Adrenal gland (tissue), 19 donors: ENCODE measurements at regions of chr3 and their contacts with region 1.

Region 1: DNA sequence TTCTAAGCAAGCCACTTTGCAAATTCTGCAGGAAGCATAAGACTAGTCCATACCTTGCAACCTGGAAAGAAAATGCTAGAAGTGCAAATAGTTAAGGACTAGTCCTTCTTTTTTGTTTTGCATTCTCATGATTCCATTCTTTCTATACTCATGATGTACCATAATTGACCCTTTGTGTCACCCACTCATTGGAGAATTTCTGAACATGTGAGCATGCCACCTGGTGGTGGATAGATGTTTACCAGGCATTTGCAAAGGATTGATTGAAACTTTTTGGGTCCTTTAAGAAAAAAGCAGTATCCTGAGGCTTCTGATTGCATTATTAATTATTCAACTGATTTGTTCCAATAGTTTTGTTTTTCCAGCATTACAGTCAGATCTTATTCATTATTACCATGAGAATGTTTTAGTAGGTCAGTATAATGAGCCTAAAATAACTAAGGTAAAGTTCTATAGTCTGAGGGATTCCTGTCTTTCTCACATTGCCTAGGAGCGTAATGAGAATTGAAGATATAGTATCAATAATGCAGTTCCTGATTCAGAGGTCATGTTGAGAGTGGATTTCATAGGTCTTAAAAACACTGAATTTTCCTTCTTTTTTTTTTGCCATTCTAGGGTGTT is 20.2 kb upstream of the DIPK2A start:
- DNase-seq: peak in 4 of 7 donors; percentile 14 to 55 (median 29)
- H3K4me3 ChIP-seq: no peak overlapping the region
- H3K27ac ChIP-seq: no peak overlapping the region
- H3K4me1 ChIP-seq: no peaks in the 10 kb centered on the region
- H3K27me3 ChIP-seq: no peaks in the 10 kb centered on the region
- CTCF ChIP-seq: peak; percentile 47 to 80 (median 64)
- POLR2A ChIP-seq: no peak

Region 2: GRCh38 chr3:143751643-143752178 is 199.8 kb before region 1 on chr3:
- intact Hi-C with region 1: no loop called
- DNase-seq: no peak
- H3K4me3 ChIP-seq: no peak overlapping the region
- H3K27ac ChIP-seq: no peak overlapping the region
- H3K4me1 ChIP-seq: no peaks in the 10 kb centered on the region
- H3K27me3 ChIP-seq: no peaks in the 10 kb centered on the region
- CTCF ChIP-seq: no peak
- POLR2A ChIP-seq: no peak

Region 3: DNA sequence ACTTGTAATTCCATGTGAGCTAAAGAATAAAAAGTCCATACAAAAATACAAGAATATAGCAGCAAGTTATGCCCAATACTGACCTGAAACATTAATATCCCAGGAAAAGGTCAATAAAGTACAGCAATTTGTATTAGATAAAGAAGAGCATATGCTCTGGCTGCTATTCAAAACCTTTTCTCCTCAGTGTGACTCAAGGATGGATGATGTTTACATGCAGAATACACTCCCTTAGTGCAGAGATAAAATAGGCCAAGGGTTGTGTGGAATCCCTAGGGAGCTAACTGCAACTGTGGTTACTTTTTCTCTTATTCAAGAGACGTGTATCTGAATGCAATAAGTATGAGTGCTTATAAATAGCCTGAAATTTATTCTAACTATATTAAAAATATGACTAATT is 181.8 kb before region 1 on chr3:
- intact Hi-C with region 1: loop called in 1 of 2 experiments (anchors 5 kb)
- DNase-seq: no peak
- H3K4me3 ChIP-seq: no peak overlapping the region
- H3K27ac ChIP-seq: no peak overlapping the region
- H3K4me1 ChIP-seq: peaks cover 5 to 15% of the 10 kb centered on the region in 2 donors
- H3K27me3 ChIP-seq: no peaks in the 10 kb centered on the region
- CTCF ChIP-seq: no peak
- POLR2A ChIP-seq: no peak

Region 4: DNA sequence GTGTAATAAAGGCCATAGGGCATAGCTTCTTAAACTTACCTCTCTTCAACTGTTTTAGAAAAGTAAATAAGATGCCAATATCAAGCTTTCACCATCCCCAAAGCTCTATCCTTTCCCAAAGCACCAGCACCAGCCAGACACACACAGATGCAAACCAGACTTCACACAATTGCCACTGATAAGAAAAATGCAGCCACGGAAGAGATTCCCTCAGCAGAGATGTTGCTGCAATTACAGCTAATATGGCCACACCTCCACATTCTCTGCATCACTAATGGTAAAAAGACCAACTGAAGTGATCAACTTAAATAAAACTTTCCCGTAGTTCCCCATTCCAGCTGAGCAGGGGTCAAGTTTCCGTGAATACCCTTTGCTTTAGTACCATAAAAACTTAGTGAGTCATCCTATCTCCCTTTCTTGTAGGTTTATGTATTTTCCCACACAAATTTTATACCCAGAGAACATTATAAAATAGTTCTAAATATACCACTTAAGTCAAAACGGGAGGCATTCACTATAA is 167.6 kb before region 1 on chr3:
- intact Hi-C with region 1: loop called in 1 of 2 experiments (anchors 5 kb)
- DNase-seq: no peak
- H3K4me3 ChIP-seq: no peak overlapping the region
- H3K27ac ChIP-seq: no peak overlapping the region
- H3K4me1 ChIP-seq: peaks cover 0 to 13% of the 10 kb centered on the region in 2 donors
- H3K27me3 ChIP-seq: no peaks in the 10 kb centered on the region
- CTCF ChIP-seq: no peak
- POLR2A ChIP-seq: no peak

Region 5: GRCh38 chr3:144375088-144375487 is 423.6 kb after region 1 on chr3:
- intact Hi-C with region 1: no loop called
- DNase-seq: no peak
- H3K4me3 ChIP-seq: no peak overlapping the region
- H3K27ac ChIP-seq: no peak overlapping the region
- H3K4me1 ChIP-seq: no peaks in the 10 kb centered on the region
- H3K27me3 ChIP-seq: no peaks in the 10 kb centered on the region
- CTCF ChIP-seq: no peak
- POLR2A ChIP-seq: no peak